CD8-positive, alpha-beta T cell (primary cell): ENCODE measurements at regions of chr1 and their contacts with region 1.

Region 1: GRCh38 chr1:16217061-16217785 is 4.8 kb upstream of the ARHGEF19 start:
- DNase-seq: peak; percentile 84 to 97 (median 94)
- ATAC-seq: peak; percentile 96
- H3K4me3 ChIP-seq: peak overlapping the region; percentile 47 to 65
- H3K4me3 Mint-ChIP-seq: peak overlapping the region; percentile 85
- H3K27ac ChIP-seq: peak overlapping the region in 1 of 2 experiments; percentile 26
- H3K27ac Mint-ChIP-seq: peak overlapping the region; percentile 71
- H3K4me1 ChIP-seq: peaks cover 17% of the 10 kb centered on the region
- H3K4me1 Mint-ChIP-seq: peaks cover 18% of the 10 kb centered on the region
- H3K27me3 ChIP-seq: no peaks in the 10 kb centered on the region
- H3K27me3 Mint-ChIP-seq: no peaks in the 10 kb centered on the region
- CTCF ChIP-seq: no peak

Region 2: DNA sequence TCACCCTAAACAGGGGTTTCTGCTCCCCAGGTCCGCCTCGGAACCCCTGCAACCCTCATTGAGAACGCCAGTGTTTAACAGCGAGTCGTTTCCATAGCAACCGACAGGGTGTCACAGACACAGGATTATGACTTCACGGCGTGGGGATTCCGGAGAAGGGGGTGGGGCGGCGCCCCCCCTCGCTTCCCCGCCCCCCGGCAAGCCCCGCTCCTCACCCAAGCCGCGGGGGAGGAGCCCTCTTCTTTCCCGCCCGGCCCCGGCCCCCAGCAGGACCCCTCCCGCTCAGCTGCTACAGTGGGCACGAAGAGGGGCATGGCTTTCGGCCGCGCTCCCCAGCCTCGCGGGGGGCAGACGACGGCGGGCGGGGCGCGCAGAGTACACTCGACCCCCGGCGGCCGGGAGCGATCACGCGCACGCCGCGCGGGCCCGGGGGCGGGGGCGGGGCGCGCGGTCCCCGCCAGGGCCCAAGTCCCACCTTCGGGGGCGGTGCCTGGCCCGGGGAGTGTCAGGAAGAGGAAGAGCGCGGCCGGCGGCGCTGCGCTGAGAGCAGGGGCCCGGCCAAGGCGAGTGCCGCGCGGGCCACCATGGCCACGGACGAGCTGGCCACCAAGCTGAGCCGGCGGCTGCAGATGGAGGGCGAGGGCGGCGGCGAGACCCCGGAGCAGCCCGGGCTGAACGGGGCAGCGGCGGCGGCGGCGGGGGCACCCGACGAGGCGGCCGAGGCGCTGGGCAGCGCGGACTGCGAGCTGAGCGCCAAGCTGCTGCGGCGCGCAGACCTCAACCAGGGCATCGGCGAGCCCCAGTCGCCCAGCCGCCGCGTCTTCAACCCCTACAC is 807.6 kb before region 1 on chr1 and contains the start of gene EFHD2:
- CTCF ChIA-PET with region 1: no interaction called
- POLR2A ChIA-PET with region 1: no interaction called
- intact Hi-C with region 1: loop called in 1 of 2 experiments (anchors 5 kb)
- DNase-seq: peak; percentile 73 to 99 (median 85)
- ATAC-seq: peak; percentile 76
- H3K4me3 ChIP-seq: peak within 1 kb of the TSS; percentile 79 to 95
- H3K4me3 Mint-ChIP-seq: peak within 1 kb of the TSS; percentile 92
- H3K27ac ChIP-seq: peak within 1 kb of the TSS; percentile 74 to 99
- H3K27ac Mint-ChIP-seq: peak within 1 kb of the TSS; percentile 97
- H3K4me1 ChIP-seq: peaks cover 48% of the 10 kb centered on the region
- H3K4me1 Mint-ChIP-seq: peaks cover 49% of the 10 kb centered on the region
- H3K27me3 ChIP-seq: no peaks in the 10 kb centered on the region
- H3K27me3 Mint-ChIP-seq: no peaks in the 10 kb centered on the region
- CTCF ChIP-seq: no peak
- total RNA-seq, gene EFHD2: 81.2 to 87.9 TPM

Region 3: GRCh38 chr1:16145662-16146278 is 71.5 kb before region 1 on chr1:
- CTCF ChIA-PET with region 1: no interaction called
- POLR2A ChIA-PET with region 1: no interaction called
- intact Hi-C with region 1: no loop called
- DNase-seq: no peak
- ATAC-seq: no peak
- H3K4me3 ChIP-seq: no peak overlapping the region
- H3K4me3 Mint-ChIP-seq: no peak overlapping the region
- H3K27ac ChIP-seq: no peak overlapping the region
- H3K27ac Mint-ChIP-seq: no peak overlapping the region
- H3K4me1 ChIP-seq: peaks cover 7% of the 10 kb centered on the region
- H3K4me1 Mint-ChIP-seq: no peaks in the 10 kb centered on the region
- H3K27me3 ChIP-seq: peaks cover 0 to 3% of the 10 kb centered on the region in 2 experiments
- H3K27me3 Mint-ChIP-seq: peaks cover 5% of the 10 kb centered on the region
- CTCF ChIP-seq: no peak

Region 4: DNA sequence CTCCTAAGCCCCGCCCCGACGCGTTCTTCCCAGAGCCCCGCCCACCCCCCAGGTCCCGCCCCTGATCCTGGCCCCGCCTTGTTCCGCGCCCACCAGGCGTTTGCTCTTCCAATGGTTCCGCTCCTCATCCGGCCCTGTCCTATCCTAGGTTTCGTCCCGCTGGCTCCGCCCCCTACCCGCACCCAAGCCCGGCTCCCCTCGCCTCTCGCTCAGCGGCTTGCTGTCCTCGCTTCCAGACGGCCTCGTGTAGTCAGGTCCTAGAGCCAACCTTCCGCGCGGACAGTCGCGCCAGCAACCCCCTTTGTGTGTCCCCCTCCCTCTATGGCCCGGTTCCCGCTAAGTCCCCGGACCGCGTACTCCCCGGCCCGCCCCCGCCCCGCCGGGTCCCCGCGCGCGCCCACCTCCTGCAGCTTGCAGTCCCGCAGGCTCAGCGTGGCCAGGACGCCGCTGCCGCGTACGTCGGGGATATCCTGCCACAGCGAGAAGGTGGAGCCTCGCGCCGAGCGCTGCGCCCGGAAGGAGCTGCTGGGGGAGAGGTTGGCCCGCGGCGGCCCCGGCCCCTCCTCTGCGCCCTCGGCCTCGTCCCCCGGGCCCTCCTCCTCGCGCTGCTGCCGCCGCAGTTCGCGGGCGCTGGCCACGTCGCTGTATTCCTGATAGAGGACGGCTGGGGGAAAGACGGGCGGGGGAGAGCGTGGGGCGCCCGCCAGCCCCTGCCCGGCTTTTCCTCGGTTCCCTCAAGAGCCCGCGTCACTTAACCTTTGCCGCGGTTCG is 10.5 kb before region 1 on chr1:
- CTCF ChIA-PET with region 1: interaction called, 4 read pairs
- POLR2A ChIA-PET with region 1: interaction called, 27 read pairs
- intact Hi-C with region 1: loop called (anchors 1 kb)
- DNase-seq: peak; percentile 84 to 97 (median 93)
- ATAC-seq: peak; percentile 86
- H3K4me3 ChIP-seq: peak overlapping the region; percentile 68 to 83
- H3K4me3 Mint-ChIP-seq: peak overlapping the region; percentile 93
- H3K27ac ChIP-seq: peak overlapping the region; percentile 69 to 87
- H3K27ac Mint-ChIP-seq: peak overlapping the region; percentile 95
- H3K4me1 ChIP-seq: peaks cover 14% of the 10 kb centered on the region
- H3K4me1 Mint-ChIP-seq: peaks cover 10% of the 10 kb centered on the region
- H3K27me3 ChIP-seq: no peaks in the 10 kb centered on the region
- H3K27me3 Mint-ChIP-seq: no peaks in the 10 kb centered on the region
- CTCF ChIP-seq: no peak

Region 5: GRCh38 chr1:17348125-17348979 is 1131.1 kb after region 1 on chr1:
- CTCF ChIA-PET with region 1: no interaction called
- POLR2A ChIA-PET with region 1: no interaction called
- intact Hi-C with region 1: no loop called
- DNase-seq: no peak
- ATAC-seq: no peak
- H3K4me3 ChIP-seq: no peak overlapping the region
- H3K4me3 Mint-ChIP-seq: no peak overlapping the region
- H3K27ac ChIP-seq: no peak overlapping the region
- H3K27ac Mint-ChIP-seq: no peak overlapping the region
- H3K4me1 ChIP-seq: peaks cover 12% of the 10 kb centered on the region
- H3K4me1 Mint-ChIP-seq: no peaks in the 10 kb centered on the region
- H3K27me3 ChIP-seq: no peaks in the 10 kb centered on the region
- H3K27me3 Mint-ChIP-seq: peaks cover 7% of the 10 kb centered on the region
- CTCF ChIP-seq: no peak